CD4-positive, alpha-beta memory T cell (primary cell): ENCODE measurements at regions of chr7 and their contacts with region 1.

Region 1: GRCh38 chr7:73522105-73522872 is at the start of gene BAZ1B:
- DNase-seq: peak; percentile 94 to 98 (median 95)
- H3K4me3 ChIP-seq: peak within 1 kb of the TSS; percentile 57 to 75
- H3K4me3 Mint-ChIP-seq: peak within 1 kb of the TSS; percentile 95 to 99 (median 96)
- H3K27ac ChIP-seq: peak within 1 kb of the TSS; percentile 84
- H3K27ac Mint-ChIP-seq: peak within 1 kb of the TSS; percentile 96 to 100 (median 99)
- H3K4me1 ChIP-seq: peaks cover 69% of the 10 kb centered on the region
- H3K4me1 Mint-ChIP-seq: peaks cover 49 to 74% (median 57%) of the 10 kb centered on the region in 4 donors
- H3K27me3 ChIP-seq: no peaks in the 10 kb centered on the region
- H3K27me3 Mint-ChIP-seq: peaks cover 0 to 2% of the 10 kb centered on the region in 2 donors
- total RNA-seq, gene BAZ1B: 75.3 to 78.6 TPM

Region 2: DNA sequence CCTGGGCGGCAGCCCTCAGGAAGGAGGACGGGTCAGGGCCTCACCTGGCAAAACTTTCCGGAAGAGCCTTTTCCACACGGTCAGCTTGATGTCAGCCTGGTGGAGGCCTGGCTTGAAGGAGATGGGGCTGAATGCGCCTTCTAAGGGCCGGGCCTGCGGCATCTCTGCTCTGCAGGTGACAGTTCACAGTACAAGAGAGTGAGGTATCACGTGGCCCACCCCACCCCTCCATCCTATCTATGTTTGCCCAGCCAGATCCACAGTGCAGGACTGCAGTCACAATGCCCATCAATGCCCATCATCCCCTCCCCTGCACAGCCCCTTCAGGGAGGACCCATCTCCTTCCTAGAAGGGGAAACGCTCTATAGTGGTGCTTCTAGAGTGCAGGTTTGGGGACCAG is 205.8 kb before region 1 on chr7:
- CTCF ChIA-PET with region 1: no interaction called
- POLR2A ChIA-PET with region 1: no interaction called
- intact Hi-C with region 1: no loop called
- DNase-seq: no peak
- H3K4me3 ChIP-seq: no peak overlapping the region
- H3K4me3 Mint-ChIP-seq: no peak overlapping the region
- H3K27ac ChIP-seq: no peak overlapping the region
- H3K27ac Mint-ChIP-seq: no peak overlapping the region
- H3K4me1 ChIP-seq: no peaks in the 10 kb centered on the region
- H3K4me1 Mint-ChIP-seq: no peaks in the 10 kb centered on the region
- H3K27me3 ChIP-seq: no peaks in the 10 kb centered on the region
- H3K27me3 Mint-ChIP-seq: no peaks in the 10 kb centered on the region

Region 3: GRCh38 chr7:73533742-73534141 is 11.5 kb after region 1 on chr7:
- CTCF ChIA-PET with region 1: interaction called, 3 read pairs
- POLR2A ChIA-PET with region 1: interaction called, 10 read pairs
- intact Hi-C with region 1: no loop called
- DNase-seq: no peak
- H3K4me3 ChIP-seq: no peak overlapping the region
- H3K4me3 Mint-ChIP-seq: no peak overlapping the region
- H3K27ac ChIP-seq: no peak overlapping the region
- H3K27ac Mint-ChIP-seq: no peak overlapping the region
- H3K4me1 ChIP-seq: no peaks in the 10 kb centered on the region
- H3K4me1 Mint-ChIP-seq: no peaks in the 10 kb centered on the region
- H3K27me3 ChIP-seq: no peaks in the 10 kb centered on the region
- H3K27me3 Mint-ChIP-seq: no peaks in the 10 kb centered on the region

Region 4: DNA sequence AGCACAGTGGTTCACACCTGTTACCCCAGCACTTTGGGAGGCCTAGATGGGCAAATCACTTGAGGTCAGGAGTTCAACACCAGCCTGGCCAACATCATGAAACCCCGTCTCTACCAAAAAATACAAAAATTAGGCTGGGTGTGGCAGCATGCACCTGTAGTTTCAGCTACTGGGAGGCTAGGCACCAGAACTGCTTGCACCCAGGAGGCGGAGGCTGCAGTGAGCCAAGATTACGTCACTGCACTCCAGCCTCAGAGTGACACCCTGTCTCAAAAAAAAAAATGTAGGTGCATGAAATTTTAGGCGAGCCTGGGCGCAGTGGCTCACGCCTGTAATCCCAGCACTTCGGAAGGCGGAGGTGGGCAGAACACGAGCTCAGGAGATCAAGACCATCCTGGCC is 25.6 kb after region 1 on chr7:
- CTCF ChIA-PET with region 1: interaction called, 11 read pairs
- POLR2A ChIA-PET with region 1: interaction called, 4 read pairs
- intact Hi-C with region 1: no loop called
- DNase-seq: no peak
- H3K4me3 ChIP-seq: no peak overlapping the region
- H3K4me3 Mint-ChIP-seq: no peak overlapping the region
- H3K27ac ChIP-seq: no peak overlapping the region
- H3K27ac Mint-ChIP-seq: peak overlapping the region in 2 of 7 donors; percentile 42 to 48
- H3K4me1 ChIP-seq: peaks cover 20% of the 10 kb centered on the region
- H3K4me1 Mint-ChIP-seq: peaks cover 16 to 50% (median 28%) of the 10 kb centered on the region in 4 donors
- H3K27me3 ChIP-seq: no peaks in the 10 kb centered on the region
- H3K27me3 Mint-ChIP-seq: no peaks in the 10 kb centered on the region

Region 5: GRCh38 chr7:73557108-73557396 is 34.8 kb after region 1 on chr7:
- CTCF ChIA-PET with region 1: interaction called, 3 read pairs
- POLR2A ChIA-PET with region 1: interaction called, 118 read pairs
- intact Hi-C with region 1: loop called (anchors 1 kb)
- DNase-seq: peak; percentile 90 to 93 (median 92)
- H3K4me3 ChIP-seq: peak overlapping the region; percentile 67 to 99
- H3K4me3 Mint-ChIP-seq: peak overlapping the region; percentile 89 to 95 (median 92)
- H3K27ac ChIP-seq: peak overlapping the region; percentile 97
- H3K27ac Mint-ChIP-seq: peak overlapping the region; percentile 91 to 96 (median 95)
- H3K4me1 ChIP-seq: peaks cover 44% of the 10 kb centered on the region
- H3K4me1 Mint-ChIP-seq: peaks cover 21 to 41% (median 29%) of the 10 kb centered on the region in 4 donors
- H3K27me3 ChIP-seq: no peaks in the 10 kb centered on the region
- H3K27me3 Mint-ChIP-seq: no peaks in the 10 kb centered on the region

Region 6: DNA sequence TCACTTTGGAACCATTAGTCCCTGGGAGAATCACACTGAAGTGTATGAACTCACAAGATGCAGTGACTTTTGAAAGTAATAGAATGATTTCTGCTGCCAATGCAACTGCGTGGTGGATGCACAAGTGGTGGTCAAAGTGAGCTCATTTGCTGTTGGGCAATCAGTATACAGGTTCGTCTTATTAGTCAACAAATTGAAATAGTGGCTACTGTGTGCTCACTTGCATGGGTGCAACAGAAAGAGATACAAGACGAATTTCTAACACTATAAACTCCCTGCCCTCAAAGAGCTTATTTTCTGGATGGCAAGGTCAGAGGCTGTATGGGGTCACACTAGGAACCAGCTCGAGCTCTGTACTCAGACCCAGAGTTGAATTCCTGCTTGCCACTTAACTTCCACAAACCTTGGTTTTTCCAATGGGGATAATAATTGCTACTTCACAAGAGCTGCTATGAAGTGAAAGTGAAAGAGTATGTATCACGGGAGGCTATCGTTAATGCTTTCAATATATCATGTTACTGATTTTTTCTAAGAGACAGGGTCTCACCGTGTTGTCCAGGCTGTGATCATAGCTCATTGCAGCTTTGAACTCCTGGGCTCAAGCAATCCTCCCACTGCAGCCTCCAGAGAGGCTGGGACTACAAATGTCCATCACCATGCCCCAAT is 43.5 kb after region 1 on chr7:
- CTCF ChIA-PET with region 1: interaction called, 6 read pairs
- POLR2A ChIA-PET with region 1: interaction called, 118 read pairs
- intact Hi-C with region 1: no loop called
- DNase-seq: no peak
- H3K4me3 ChIP-seq: peak overlapping the region; percentile 51 to 57
- H3K4me3 Mint-ChIP-seq: peak overlapping the region; percentile 74 to 93 (median 87)
- H3K27ac ChIP-seq: peak overlapping the region; percentile 43
- H3K27ac Mint-ChIP-seq: peak overlapping the region; percentile 39 to 91 (median 87)
- H3K4me1 ChIP-seq: peaks cover 16% of the 10 kb centered on the region
- H3K4me1 Mint-ChIP-seq: peaks cover 15 to 32% (median 23%) of the 10 kb centered on the region in 4 donors
- H3K27me3 ChIP-seq: no peaks in the 10 kb centered on the region
- H3K27me3 Mint-ChIP-seq: no peaks in the 10 kb centered on the region

Region 7: GRCh38 chr7:73578342-73579127 is 56.2 kb after region 1 on chr7 and contains the start of gene TBL2:
- CTCF ChIA-PET with region 1: interaction called, 3 read pairs
- POLR2A ChIA-PET with region 1: interaction called, 52 read pairs
- intact Hi-C with region 1: loop called (anchors 1 kb)
- DNase-seq: peak; percentile 98 to 99 (median 98)
- H3K4me3 ChIP-seq: peak within 1 kb of the TSS; percentile 60 to 78
- H3K4me3 Mint-ChIP-seq: peak within 1 kb of the TSS; percentile 87 to 99 (median 96)
- H3K27ac ChIP-seq: peak within 1 kb of the TSS; percentile 82
- H3K27ac Mint-ChIP-seq: peak within 1 kb of the TSS; percentile 86 to 99 (median 98)
- H3K4me1 ChIP-seq: peaks cover 29% of the 10 kb centered on the region
- H3K4me1 Mint-ChIP-seq: peaks cover 13 to 37% (median 22%) of the 10 kb centered on the region in 4 donors
- H3K27me3 ChIP-seq: no peaks in the 10 kb centered on the region
- H3K27me3 Mint-ChIP-seq: no peaks in the 10 kb centered on the region
- total RNA-seq, gene TBL2: 45.4 to 47.5 TPM

Region 8: DNA sequence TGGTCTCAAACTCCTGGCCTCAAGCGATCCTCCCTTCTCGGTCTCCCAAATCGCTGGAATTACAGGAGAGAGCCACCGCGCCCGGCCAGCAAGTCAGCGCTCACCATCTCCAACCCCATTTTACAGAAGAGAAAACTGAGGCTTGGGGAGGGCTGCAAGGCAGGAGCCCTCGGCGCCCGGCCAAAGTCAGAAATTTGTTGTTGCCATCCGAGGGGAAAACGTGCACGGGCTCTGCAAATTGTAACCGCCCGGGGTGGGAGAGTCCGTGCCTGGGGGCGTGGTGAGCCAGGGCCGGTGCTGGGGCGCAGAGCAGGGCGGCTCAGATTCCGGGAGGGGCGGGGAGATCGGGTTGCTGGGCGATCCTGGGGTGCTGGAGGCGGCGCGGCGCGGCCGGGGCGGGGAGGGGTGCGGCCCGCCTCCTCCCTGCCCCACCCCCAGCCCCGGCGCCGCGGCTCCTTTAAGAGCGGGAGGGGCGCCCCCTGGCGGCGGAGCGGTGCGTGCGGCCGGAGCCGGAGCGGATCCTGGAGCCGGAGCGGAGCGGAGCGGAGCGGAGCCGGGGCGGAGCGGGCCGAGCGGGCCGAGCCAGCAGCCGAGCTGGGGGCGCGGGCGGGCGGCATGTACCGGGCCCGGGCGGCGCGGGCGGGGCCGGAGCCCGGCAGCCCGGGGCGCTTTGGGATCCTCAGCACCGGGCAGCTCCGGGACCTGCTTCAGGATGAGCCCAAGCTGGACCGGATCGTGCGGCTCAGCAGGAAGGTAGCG is 145.2 kb after region 1 on chr7 and contains the start of gene VPS37D:
- CTCF ChIA-PET with region 1: no interaction called
- POLR2A ChIA-PET with region 1: interaction called, 5 read pairs
- intact Hi-C with region 1: loop called (anchors 1 kb)
- DNase-seq: peak; percentile 87 to 96 (median 91)
- H3K4me3 ChIP-seq: peak within 1 kb of the TSS in 1 of 2 donors; percentile 44
- H3K4me3 Mint-ChIP-seq: peak within 1 kb of the TSS; percentile 70 to 81 (median 76)
- H3K27ac ChIP-seq: no peak within 1 kb of the TSS
- H3K27ac Mint-ChIP-seq: peak within 1 kb of the TSS in 6 of 7 donors; percentile 48 to 70 (median 54)
- H3K4me1 ChIP-seq: peaks cover 10% of the 10 kb centered on the region
- H3K4me1 Mint-ChIP-seq: peaks cover 4 to 12% (median 7%) of the 10 kb centered on the region in 4 donors
- H3K27me3 ChIP-seq: peaks cover 13% of the 10 kb centered on the region
- H3K27me3 Mint-ChIP-seq: peaks cover 19 to 31% of the 10 kb centered on the region in 2 donors
- total RNA-seq, gene VPS37D: not detected